CD8-positive, alpha-beta T cell (primary cell): ENCODE measurements at regions of chr3 and their contacts with region 1.

Region 1: DNA sequence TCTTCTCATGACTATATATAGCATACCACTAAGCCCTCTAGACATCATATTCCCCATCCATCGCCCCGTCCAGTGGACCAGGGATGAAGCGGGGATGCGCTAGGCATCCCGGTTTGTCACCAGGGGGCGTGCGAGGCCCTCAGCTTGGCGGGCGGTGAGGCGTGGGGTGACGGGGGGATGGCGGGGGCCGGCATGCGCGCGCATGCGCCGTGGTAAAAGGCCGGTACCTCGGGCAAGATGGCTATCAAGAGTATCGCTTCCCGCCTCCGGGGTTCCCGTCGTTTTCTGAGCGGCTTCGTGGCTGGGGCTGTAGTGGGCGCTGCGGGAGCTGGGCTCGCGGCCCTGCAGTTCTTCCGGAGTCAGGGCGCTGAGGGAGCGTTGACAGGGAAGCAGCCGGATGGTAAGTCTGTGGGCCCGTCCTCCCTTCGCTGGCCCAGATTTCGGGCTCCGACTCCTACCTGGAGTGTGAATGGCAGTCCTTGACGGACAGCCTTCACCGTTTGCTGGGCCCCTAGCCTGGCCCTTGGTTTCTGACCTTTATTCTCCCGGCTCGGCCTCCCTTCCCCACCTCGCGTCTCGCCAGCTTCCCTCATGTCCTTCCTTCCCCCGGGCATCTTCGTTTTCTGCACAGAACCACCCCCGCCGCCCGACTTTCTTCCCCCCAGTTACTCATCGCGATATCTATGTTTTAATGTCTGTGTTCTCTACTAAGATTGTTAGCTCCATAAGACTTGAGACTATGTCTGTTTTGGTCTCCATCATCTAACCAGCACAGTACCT is at the start of gene EXOG:
- DNase-seq: peak; percentile 93 to 97 (median 95)
- ATAC-seq: peak; percentile 95
- H3K4me3 ChIP-seq: peak within 1 kb of the TSS; percentile 88 to 96
- H3K4me3 Mint-ChIP-seq: peak within 1 kb of the TSS; percentile 97
- H3K27ac ChIP-seq: peak within 1 kb of the TSS; percentile 66 to 71
- H3K27ac Mint-ChIP-seq: peak within 1 kb of the TSS; percentile 91
- H3K4me1 ChIP-seq: peaks cover 14% of the 10 kb centered on the region
- H3K4me1 Mint-ChIP-seq: peaks cover 32% of the 10 kb centered on the region
- H3K27me3 ChIP-seq: no peaks in the 10 kb centered on the region
- H3K27me3 Mint-ChIP-seq: no peaks in the 10 kb centered on the region
- CTCF ChIP-seq: peak; percentile 92
- total RNA-seq, gene EXOG: 16.5 to 20.1 TPM

Region 2: GRCh38 chr3:38136777-38137614 is 359.3 kb before region 1 on chr3 and contains the start of gene ACAA1:
- CTCF ChIA-PET with region 1: no interaction called
- POLR2A ChIA-PET with region 1: no interaction called
- intact Hi-C with region 1: loop called in 1 of 2 experiments (anchors 5 kb)
- DNase-seq: peak; percentile 93 to 99 (median 97)
- ATAC-seq: peak; percentile 86
- H3K4me3 ChIP-seq: peak within 1 kb of the TSS; percentile 94 to 99
- H3K4me3 Mint-ChIP-seq: peak within 1 kb of the TSS; percentile 93
- H3K27ac ChIP-seq: peak within 1 kb of the TSS; percentile 74 to 88
- H3K27ac Mint-ChIP-seq: peak within 1 kb of the TSS; percentile 98
- H3K4me1 ChIP-seq: peaks cover 45% of the 10 kb centered on the region
- H3K4me1 Mint-ChIP-seq: peaks cover 70% of the 10 kb centered on the region
- H3K27me3 ChIP-seq: no peaks in the 10 kb centered on the region
- H3K27me3 Mint-ChIP-seq: no peaks in the 10 kb centered on the region
- CTCF ChIP-seq: no peak
- total RNA-seq, gene ACAA1: 49.4 to 49.9 TPM

Region 3: GRCh38 chr3:38453075-38453912 is 43.0 kb before region 1 on chr3 and contains the start of gene ACVR2B:
- CTCF ChIA-PET with region 1: no interaction called
- POLR2A ChIA-PET with region 1: no interaction called
- intact Hi-C with region 1: loop called in 1 of 2 experiments (anchors 1 kb)
- DNase-seq: peak; percentile 15 to 82 (median 66)
- ATAC-seq: peak; percentile 62
- H3K4me3 ChIP-seq: peak within 1 kb of the TSS; percentile 55 to 62
- H3K4me3 Mint-ChIP-seq: peak within 1 kb of the TSS; percentile 98
- H3K27ac ChIP-seq: peak within 1 kb of the TSS in 1 of 2 experiments; percentile 32
- H3K27ac Mint-ChIP-seq: peak within 1 kb of the TSS; percentile 92
- H3K4me1 ChIP-seq: peaks cover 18% of the 10 kb centered on the region
- H3K4me1 Mint-ChIP-seq: peaks cover 30% of the 10 kb centered on the region
- H3K27me3 ChIP-seq: peaks cover 0 to 3% of the 10 kb centered on the region in 2 experiments
- H3K27me3 Mint-ChIP-seq: no peaks in the 10 kb centered on the region
- CTCF ChIP-seq: no peak
- total RNA-seq, gene ACVR2B: 2.1 to 3.0 TPM

Region 4: DNA sequence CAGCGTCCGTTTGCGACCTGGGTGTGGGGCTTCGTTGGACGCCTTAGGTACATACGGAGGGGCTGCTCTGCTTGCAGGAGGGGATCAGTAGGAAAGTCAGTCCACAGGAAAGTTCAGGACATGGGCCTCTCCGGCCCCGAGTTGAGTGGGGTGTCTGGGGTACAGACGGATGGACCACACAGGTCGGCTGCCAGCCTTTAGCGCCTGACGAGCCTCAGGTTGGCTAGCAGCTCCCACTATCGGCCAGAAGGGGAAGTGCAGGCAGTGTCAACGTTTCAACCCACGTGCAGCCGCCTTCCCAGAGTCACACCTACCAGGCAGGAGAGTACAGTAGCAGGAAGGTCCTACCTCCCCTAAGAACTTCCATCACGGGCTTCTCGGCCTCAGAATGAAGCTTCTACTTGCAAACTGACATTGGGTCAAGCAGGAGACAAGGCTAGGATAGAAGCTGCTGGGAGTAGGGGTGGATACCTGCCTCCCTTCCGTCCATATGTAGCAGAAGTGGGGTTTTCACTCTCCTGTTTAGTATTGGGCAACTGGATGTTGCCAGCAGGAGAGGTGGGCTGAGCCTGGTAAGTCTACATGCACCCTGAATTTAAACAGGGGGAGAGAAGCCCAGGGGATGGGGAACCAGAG is 155.0 kb after region 1 on chr3:
- CTCF ChIA-PET with region 1: interaction called, 25 read pairs
- POLR2A ChIA-PET with region 1: interaction called, 6 read pairs
- intact Hi-C with region 1: loop called (anchors 1 kb)
- DNase-seq: peak; percentile 49 to 82 (median 67)
- ATAC-seq: peak; percentile 74
- H3K4me3 ChIP-seq: no peak overlapping the region
- H3K4me3 Mint-ChIP-seq: peak overlapping the region; percentile 52
- H3K27ac ChIP-seq: no peak overlapping the region
- H3K27ac Mint-ChIP-seq: no peak overlapping the region
- H3K4me1 ChIP-seq: peaks cover 21% of the 10 kb centered on the region
- H3K4me1 Mint-ChIP-seq: peaks cover 13% of the 10 kb centered on the region
- H3K27me3 ChIP-seq: peaks cover 7 to 17% of the 10 kb centered on the region in 2 experiments
- H3K27me3 Mint-ChIP-seq: peaks cover 9% of the 10 kb centered on the region
- CTCF ChIP-seq: peak; percentile 96

Region 5: DNA sequence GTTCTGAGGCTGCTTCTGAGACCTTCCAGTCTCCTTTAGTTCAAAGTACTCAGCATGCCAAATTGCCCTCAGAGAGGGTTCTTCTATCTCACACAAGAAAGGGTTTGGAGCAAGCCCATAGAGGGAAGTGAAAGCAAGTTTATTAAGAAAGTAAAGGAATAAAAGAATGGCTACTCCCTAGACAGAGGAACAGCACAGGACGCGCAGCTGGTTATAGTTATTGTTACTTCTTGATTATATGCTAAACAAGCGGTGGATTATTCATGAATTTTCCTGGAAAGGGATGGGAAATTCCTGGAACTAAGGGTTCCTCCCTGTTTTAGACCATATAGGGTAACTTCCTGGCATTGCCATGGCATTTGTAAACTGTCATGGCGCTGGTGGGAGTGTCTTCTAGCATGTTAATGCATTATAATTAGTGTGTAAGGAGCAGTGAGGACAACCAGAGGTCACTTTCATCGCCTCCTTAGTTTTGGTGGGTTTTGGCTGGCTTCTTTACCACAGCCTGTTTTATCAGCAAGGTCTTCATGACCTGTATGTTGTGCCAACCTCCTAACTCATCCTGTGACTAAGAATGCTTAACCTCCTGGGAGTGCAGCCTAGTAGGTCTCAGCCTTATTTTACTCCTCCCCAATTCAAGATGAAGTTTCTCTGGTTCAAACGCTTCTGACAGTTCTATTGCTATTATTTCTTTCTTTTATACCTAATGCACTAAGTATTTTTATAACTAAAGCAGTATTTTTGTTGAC is 529.1 kb after region 1 on chr3:
- CTCF ChIA-PET with region 1: no interaction called
- POLR2A ChIA-PET with region 1: interaction called, 3 read pairs
- intact Hi-C with region 1: loop called in 1 of 2 experiments (anchors 2 kb)
- DNase-seq: no peak
- ATAC-seq: no peak
- H3K4me3 ChIP-seq: no peak overlapping the region
- H3K4me3 Mint-ChIP-seq: no peak overlapping the region
- H3K27ac ChIP-seq: no peak overlapping the region
- H3K27ac Mint-ChIP-seq: no peak overlapping the region
- H3K4me1 ChIP-seq: no peaks in the 10 kb centered on the region
- H3K4me1 Mint-ChIP-seq: no peaks in the 10 kb centered on the region
- H3K27me3 ChIP-seq: no peaks in the 10 kb centered on the region
- H3K27me3 Mint-ChIP-seq: peaks cover 12% of the 10 kb centered on the region
- CTCF ChIP-seq: no peak

Region 6: GRCh38 chr3:40309418-40309924 is 1813.2 kb after region 1 on chr3 and contains the start of gene EIF1B:
- CTCF ChIA-PET with region 1: no interaction called
- POLR2A ChIA-PET with region 1: no interaction called
- intact Hi-C with region 1: loop called in 1 of 2 experiments (anchors 5 kb)
- DNase-seq: peak; percentile 97 to 99 (median 98)
- ATAC-seq: peak; percentile 85
- H3K4me3 ChIP-seq: peak within 1 kb of the TSS; percentile 95 to 96
- H3K4me3 Mint-ChIP-seq: peak within 1 kb of the TSS; percentile 98
- H3K27ac ChIP-seq: peak within 1 kb of the TSS; percentile 93 to 96
- H3K27ac Mint-ChIP-seq: peak within 1 kb of the TSS; percentile 99
- H3K4me1 ChIP-seq: peaks cover 18% of the 10 kb centered on the region
- H3K4me1 Mint-ChIP-seq: peaks cover 33% of the 10 kb centered on the region
- H3K27me3 ChIP-seq: no peaks in the 10 kb centered on the region
- H3K27me3 Mint-ChIP-seq: no peaks in the 10 kb centered on the region
- CTCF ChIP-seq: peak; percentile 67
- total RNA-seq, gene EIF1B: 133 to 135 TPM